Brain microvascular endothelial cell (primary cell): ENCODE measurements at regions of chr11 and their contacts with region 1.

Region 1: GRCh38 chr11:128686745-128687177 is 7.1 kb upstream of the FLI1 start:
- DNase-seq: peak; percentile 35
- H3K4me3 ChIP-seq: peak overlapping the region; percentile 51
- H3K27ac ChIP-seq: no peak overlapping the region
- H3K27me3 ChIP-seq: peaks cover 22% of the 10 kb centered on the region
- CTCF ChIP-seq: no peak

Region 2: GRCh38 chr11:128039140-128040021 is 647.4 kb before region 1 on chr11:
- in situ Hi-C with region 1: loop called (anchors 25 kb)
- DNase-seq: peak; percentile 45
- H3K4me3 ChIP-seq: no peak overlapping the region
- H3K27ac ChIP-seq: no peak overlapping the region
- H3K27me3 ChIP-seq: no peaks in the 10 kb centered on the region
- CTCF ChIP-seq: no peak

Region 3: GRCh38 chr11:128824191-128825049 is 137.7 kb after region 1 on chr11:
- in situ Hi-C with region 1: no loop called
- DNase-seq: no peak
- H3K4me3 ChIP-seq: peak overlapping the region; percentile 35
- H3K27ac ChIP-seq: no peak overlapping the region
- H3K27me3 ChIP-seq: no peaks in the 10 kb centered on the region
- CTCF ChIP-seq: no peak

Region 4: DNA sequence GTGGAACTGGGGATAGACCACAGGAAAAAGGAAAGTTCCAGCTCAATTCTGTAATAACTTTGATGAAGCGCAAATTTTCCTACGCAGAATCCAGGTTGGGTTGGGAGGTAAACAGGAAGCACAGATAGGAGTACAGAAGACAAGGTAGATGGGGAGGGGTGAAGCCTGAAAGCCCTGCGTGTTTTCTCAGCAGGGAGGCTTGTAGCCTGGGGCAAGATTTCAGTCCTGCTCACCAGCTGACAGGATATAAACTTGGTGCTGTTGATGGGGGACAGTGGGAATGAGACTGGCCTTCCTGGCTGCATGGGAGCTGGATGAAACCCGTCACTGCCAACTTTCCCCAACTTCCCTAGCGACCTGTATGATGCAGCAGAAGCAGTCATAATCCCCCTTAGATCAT is 390.4 kb after region 1 on chr11:
- in situ Hi-C with region 1: no loop called
- DNase-seq: no peak
- H3K4me3 ChIP-seq: no peak overlapping the region
- H3K27ac ChIP-seq: no peak overlapping the region
- H3K27me3 ChIP-seq: no peaks in the 10 kb centered on the region
- CTCF ChIP-seq: no peak